A549 (cell line): ENCODE measurements at regions of chr5 and their contacts with region 1.

Region 1: DNA sequence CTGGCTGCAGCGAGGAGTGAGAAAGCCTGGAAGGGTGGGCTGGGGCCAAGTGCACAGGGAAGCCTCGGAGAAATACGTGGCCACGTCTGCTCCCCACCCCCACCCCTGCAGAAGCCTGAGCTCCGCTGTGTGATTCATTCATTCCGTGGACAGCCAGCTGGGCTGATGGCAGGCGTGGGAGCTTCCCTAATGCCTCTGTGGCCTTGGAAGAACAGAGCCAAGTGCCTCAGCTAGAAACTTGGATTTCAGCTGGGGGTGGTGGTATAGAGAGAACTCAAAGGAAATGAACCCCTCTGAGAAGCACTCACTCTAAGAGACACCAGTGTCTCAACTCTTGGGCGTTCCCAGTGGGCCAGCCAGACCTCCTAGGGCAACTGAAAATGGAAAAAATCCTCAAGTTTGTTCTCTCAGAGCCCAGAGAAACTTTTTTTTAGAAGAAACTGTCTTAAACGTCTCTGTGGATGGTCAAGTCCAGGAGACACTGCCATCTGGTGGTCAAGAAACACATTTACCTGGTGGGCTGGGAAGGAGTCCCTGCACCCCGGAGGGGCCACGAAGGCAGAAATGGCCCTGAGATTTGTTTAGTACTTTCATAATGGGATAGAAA is 18.0 kb downstream of the ATOX1 start:
- DNase-seq: peak; percentile 78 to 83
- ATAC-seq: peak; percentile 75 to 83
- H3K4me3 ChIP-seq: no peak overlapping the region
- H3K27ac ChIP-seq: peak overlapping the region; percentile 68 to 92
- H3K4me1 ChIP-seq: peaks cover 37% of the 10 kb centered on the region
- CTCF ChIP-seq: peak; percentile 95
- EP300 ChIP-seq: no peak
- POLR2A ChIP-seq: no peak
- RAD21 ChIP-seq: peak; percentile 79 to 87

Region 2: GRCh38 chr5:151659001-151659754 is 81.3 kb before region 1 on chr5:
- CTCF ChIA-PET with region 1: interaction called, 529 read pairs
- POLR2A ChIA-PET with region 1: interaction called, 12 read pairs
- DNase-seq: peak; percentile 79 to 83
- ATAC-seq: peak; percentile 97 to 98
- H3K4me3 ChIP-seq: no peak overlapping the region
- H3K27ac ChIP-seq: peak overlapping the region; percentile 45 to 81; a peak in 5 of 6 replicates
- H3K4me1 ChIP-seq: peaks cover 5% of the 10 kb centered on the region; the same call in 1 of the 3 replicates
- CTCF ChIP-seq: peak; percentile 93
- EP300 ChIP-seq: no peak
- POLR2A ChIP-seq: no peak
- RAD21 ChIP-seq: peak; percentile 98

Region 3: GRCh38 chr5:151684690-151685361 is 55.6 kb before region 1 on chr5:
- CTCF ChIA-PET with region 1: interaction called, 19 read pairs
- POLR2A ChIA-PET with region 1: no interaction called
- DNase-seq: peak in 1 of 2 experiments; percentile 74
- ATAC-seq: peak; percentile 72 to 83
- H3K4me3 ChIP-seq: no peak overlapping the region
- H3K27ac ChIP-seq: peak overlapping the region; percentile 70 to 86
- H3K4me1 ChIP-seq: peaks cover 39% of the 10 kb centered on the region
- CTCF ChIP-seq: no peak
- EP300 ChIP-seq: no peak
- POLR2A ChIP-seq: no peak
- RAD21 ChIP-seq: peak in 1 of 2 experiments; percentile 2; a peak in 1 of 5 replicates

Region 4: GRCh38 chr5:151699071-151699901 is 41.2 kb before region 1 on chr5:
- CTCF ChIA-PET with region 1: interaction called, 19 read pairs
- POLR2A ChIA-PET with region 1: interaction called, 5 read pairs
- DNase-seq: peak; percentile 61 to 77
- ATAC-seq: peak; percentile 93 to 95
- H3K4me3 ChIP-seq: no peak overlapping the region
- H3K27ac ChIP-seq: peak overlapping the region; percentile 71 to 93
- H3K4me1 ChIP-seq: peaks cover 48% of the 10 kb centered on the region
- CTCF ChIP-seq: no peak
- EP300 ChIP-seq: no peak
- POLR2A ChIP-seq: no peak
- RAD21 ChIP-seq: 0 out of 5 replicates have a peak, but pooled peaks of 1 of the 2 experiments have one; percentile 3

Region 5: GRCh38 chr5:151719228-151720000 is 21.0 kb before region 1 on chr5:
- CTCF ChIA-PET with region 1: interaction called, 65 read pairs
- POLR2A ChIA-PET with region 1: interaction called, 3 read pairs
- DNase-seq: peak in 1 of 2 experiments; percentile 33
- ATAC-seq: peak in 1 of 2 experiments; percentile 76; a peak in 3 of 6 replicates
- H3K4me3 ChIP-seq: no peak overlapping the region
- H3K27ac ChIP-seq: peak overlapping the region in 1 of 2 experiments; percentile 66; a peak in 3 of 6 replicates
- H3K4me1 ChIP-seq: peaks cover 12% of the 10 kb centered on the region; the same call in 2 of the 3 replicates
- CTCF ChIP-seq: peak; percentile 40
- EP300 ChIP-seq: no peak
- POLR2A ChIP-seq: no peak
- RAD21 ChIP-seq: peak; percentile 57 to 59

Region 6: GRCh38 chr5:151751091-151751490 is 10.7 kb after region 1 on chr5:
- CTCF ChIA-PET with region 1: interaction called, 56 read pairs
- POLR2A ChIA-PET with region 1: no interaction called
- DNase-seq: no peak
- ATAC-seq: no peak
- H3K4me3 ChIP-seq: no peak overlapping the region
- H3K27ac ChIP-seq: no peak overlapping the region
- H3K4me1 ChIP-seq: no peaks in the 10 kb centered on the region
- CTCF ChIP-seq: no peak
- EP300 ChIP-seq: no peak
- POLR2A ChIP-seq: no peak
- RAD21 ChIP-seq: no peak